Heart right ventricle (tissue), 16 donors: ENCODE measurements at regions of chr2 and their contacts with region 1.

Region 1: DNA sequence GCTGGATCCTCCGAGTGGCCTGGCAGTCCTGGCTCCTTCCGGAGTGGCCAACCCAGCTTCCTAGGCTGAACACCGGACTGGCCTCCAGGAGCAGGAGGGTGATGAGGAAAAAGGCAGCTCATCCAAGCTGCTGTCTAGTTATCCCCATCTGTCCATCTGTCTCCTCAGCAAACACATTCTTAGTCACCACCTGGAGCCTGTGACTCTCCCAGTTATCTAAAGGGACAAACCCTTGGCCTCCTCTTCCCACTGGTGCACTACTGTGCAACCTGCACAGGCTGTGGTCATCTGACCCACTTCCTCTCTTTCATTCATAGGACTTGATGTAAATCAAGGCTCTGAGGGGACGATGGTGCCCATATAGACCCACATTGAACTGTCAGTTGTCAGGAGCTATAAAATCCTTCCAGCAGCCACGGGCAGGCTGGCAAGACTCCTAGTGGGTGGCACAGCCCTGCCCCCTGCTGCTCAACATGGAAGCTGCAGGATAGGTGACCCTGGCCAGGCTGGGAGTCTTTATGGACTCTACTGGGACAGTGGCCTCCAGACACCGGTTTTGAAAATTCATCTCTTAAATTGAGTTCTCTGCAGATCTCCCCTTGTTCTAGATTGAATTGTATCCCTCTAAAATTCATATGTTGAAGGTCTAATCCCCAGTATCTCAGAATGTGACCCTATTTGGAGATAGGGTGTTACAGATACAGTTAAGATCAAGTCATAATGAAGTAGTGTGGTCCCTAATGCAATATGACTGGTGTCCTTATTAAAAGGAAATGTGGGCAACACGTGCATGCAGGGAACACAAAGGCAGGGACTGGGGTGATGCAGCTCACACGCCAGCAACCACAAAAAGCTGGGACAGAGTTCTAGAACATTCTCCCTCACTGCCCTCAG is 29.3 kb upstream of the DUSP2 start:
- DNase-seq: peak; percentile 63 to 75
- ATAC-seq: peak; percentile 74 to 89 (median 84)
- H3K4me3 ChIP-seq: no peak overlapping the region
- H3K27ac ChIP-seq: no peak overlapping the region
- H3K4me1 ChIP-seq: peaks cover 0 to 20% (median 0%) of the 10 kb centered on the region in 9 donors
- H3K27me3 ChIP-seq: no peaks in the 10 kb centered on the region
- CTCF ChIP-seq: peak; percentile 73 to 96 (median 92)

Region 2: GRCh38 chr2:96024336-96025193 is 149.9 kb before region 1 on chr2:
- intact Hi-C with region 1: loop called in 3 of 10 experiments (anchors 10 kb)
- DNase-seq: no peak
- ATAC-seq: peak in 1 of 8 donors; percentile 4
- H3K4me3 ChIP-seq: no peak overlapping the region
- H3K27ac ChIP-seq: no peak overlapping the region
- H3K4me1 ChIP-seq: peaks cover 0 to 7% (median 0%) of the 10 kb centered on the region in 9 donors
- H3K27me3 ChIP-seq: no peaks in the 10 kb centered on the region
- CTCF ChIP-seq: no peak

Region 3: GRCh38 chr2:96265840-96266679 is 91.6 kb after region 1 on chr2 and contains the starts of genes CIAO1 and TMEM127:
- intact Hi-C with region 1: no loop called
- DNase-seq: peak; percentile 98 to 99
- ATAC-seq: peak; percentile 96 to 98 (median 98)
- H3K4me3 ChIP-seq: peak within 1 kb of the TSS; percentile 91 to 99 (median 96)
- H3K27ac ChIP-seq: peak within 1 kb of the TSS; percentile 84 to 99 (median 96)
- H3K4me1 ChIP-seq: peaks cover 27 to 57% (median 51%) of the 10 kb centered on the region in 9 donors
- H3K27me3 ChIP-seq: no peaks in the 10 kb centered on the region
- CTCF ChIP-seq: peak in 5 of 9 donors; percentile 22 to 38 (median 34)
- total RNA-seq, gene CIAO1: 59.2 to 72.1 (median 64.9) TPM
- total RNA-seq, gene TMEM127: 72.2 to 113 (median 95.1) TPM

Region 4: GRCh38 chr2:96427917-96428316 is 253.4 kb after region 1 on chr2:
- intact Hi-C with region 1: no loop called
- DNase-seq: no peak
- ATAC-seq: peak in 1 of 8 donors; percentile 39
- H3K4me3 ChIP-seq: no peak overlapping the region
- H3K27ac ChIP-seq: no peak overlapping the region
- H3K4me1 ChIP-seq: peaks cover 0 to 23% (median 5%) of the 10 kb centered on the region in 9 donors
- H3K27me3 ChIP-seq: no peaks in the 10 kb centered on the region
- CTCF ChIP-seq: no peak

Region 5: DNA sequence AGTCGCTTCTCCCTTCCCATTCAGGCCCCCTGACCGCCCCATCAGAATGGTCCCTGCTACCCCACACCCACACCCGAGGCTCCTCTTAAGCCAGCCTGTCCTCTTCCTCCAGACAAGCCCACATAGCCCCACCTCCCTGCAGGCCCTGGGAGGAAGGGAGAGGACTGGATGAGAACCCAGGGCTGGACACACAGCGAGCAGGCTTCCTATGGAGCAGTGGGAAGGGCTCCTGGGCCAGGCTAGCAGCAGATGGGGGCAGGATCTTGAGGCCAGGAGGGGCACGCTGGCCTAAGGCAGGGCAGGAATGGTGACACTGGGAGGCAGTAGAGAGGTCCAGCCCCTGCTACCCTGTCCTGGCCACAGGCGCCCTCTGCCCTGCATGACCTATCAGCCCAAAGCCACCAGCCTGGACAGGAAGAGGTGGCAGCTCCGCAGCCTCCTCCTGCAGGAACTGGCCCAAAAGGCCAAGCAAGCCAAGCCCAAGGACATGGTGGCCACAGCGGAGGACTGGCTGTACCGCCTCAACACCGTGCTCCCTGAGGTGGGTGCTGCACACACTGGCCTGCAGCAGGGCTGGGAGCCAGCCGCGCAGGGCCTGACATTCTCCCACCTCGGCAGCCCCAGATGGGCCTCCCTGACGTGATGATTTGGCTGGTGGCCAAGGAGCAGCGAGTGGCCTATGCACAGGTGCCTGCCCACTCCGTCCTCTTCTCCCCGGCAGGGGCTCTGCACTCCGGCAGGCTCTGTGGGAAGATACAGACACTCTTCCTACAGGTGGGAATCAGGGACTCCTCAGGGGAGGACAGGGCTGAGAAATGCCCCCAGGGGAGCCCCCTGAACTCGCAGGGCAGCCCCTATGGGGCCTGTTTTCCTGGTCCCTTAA is 511.3 kb after region 1 on chr2:
- intact Hi-C with region 1: no loop called
- DNase-seq: peak in 1 of 2 donors; percentile 35
- ATAC-seq: peak; percentile 46 to 73 (median 58)
- H3K4me3 ChIP-seq: peak overlapping the region in 1 of 10 donors; percentile 20
- H3K27ac ChIP-seq: no peak overlapping the region
- H3K4me1 ChIP-seq: peaks cover 0 to 15% (median 10%) of the 10 kb centered on the region in 9 donors
- H3K27me3 ChIP-seq: peaks cover 0 to 7% (median 0%) of the 10 kb centered on the region in 7 donors
- CTCF ChIP-seq: no peak

Region 6: DNA sequence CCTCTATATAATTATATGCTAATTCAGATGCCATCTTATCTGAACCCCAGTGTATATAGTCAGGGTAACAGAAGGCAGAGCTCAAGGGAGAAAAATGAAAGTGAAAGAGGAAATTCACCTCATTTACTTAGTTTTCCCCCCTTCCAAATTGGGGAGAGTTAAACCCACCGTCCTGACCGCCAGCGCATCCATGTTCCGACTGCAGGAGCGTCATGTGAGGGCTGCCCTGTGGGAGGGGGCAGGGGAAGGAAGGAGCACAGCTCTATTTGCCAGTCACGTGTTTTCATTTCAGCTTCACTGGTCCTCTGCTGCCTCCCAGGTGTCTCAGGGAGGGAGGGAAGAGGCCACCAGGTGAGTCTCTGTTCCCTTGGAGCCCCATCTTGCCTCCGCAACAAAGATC is 599.4 kb after region 1 on chr2:
- intact Hi-C with region 1: no loop called
- DNase-seq: no peak
- ATAC-seq: no peak
- H3K4me3 ChIP-seq: peak overlapping the region in 3 of 10 donors; percentile 10 to 50 (median 14)
- H3K27ac ChIP-seq: peak overlapping the region in 1 of 10 donors; percentile 64
- H3K4me1 ChIP-seq: peaks cover 0 to 26% (median 9%) of the 10 kb centered on the region in 9 donors
- H3K27me3 ChIP-seq: no peaks in the 10 kb centered on the region
- CTCF ChIP-seq: no peak